H1 (cell line): ENCODE measurements at regions of chr9 and their contacts with region 1.

Region 1: GRCh38 chr9:34603610-34604231 is 8.2 kb downstream of the RPP25L start:
- DNase-seq: peak in 1 of 2 experiments; percentile 96
- H3K4me3 ChIP-seq: no peak overlapping the region
- H3K27ac ChIP-seq: no peak overlapping the region
- H3K4me1 ChIP-seq: peaks cover 0 to 5% (median 2%) of the 10 kb centered on the region in 4 experiments; a peak in 2 of 7 replicates
- H3K27me3 ChIP-seq: peaks cover 0 to 3% (median 0%) of the 10 kb centered on the region in 4 experiments; a peak in 2 of 7 replicates
- CTCF ChIP-seq: peak; percentile 77 to 96 (median 96)
- EP300 ChIP-seq: no peak
- POLR2A ChIP-seq: no peak
- RAD21 ChIP-seq: peak; percentile 99

Region 2: DNA sequence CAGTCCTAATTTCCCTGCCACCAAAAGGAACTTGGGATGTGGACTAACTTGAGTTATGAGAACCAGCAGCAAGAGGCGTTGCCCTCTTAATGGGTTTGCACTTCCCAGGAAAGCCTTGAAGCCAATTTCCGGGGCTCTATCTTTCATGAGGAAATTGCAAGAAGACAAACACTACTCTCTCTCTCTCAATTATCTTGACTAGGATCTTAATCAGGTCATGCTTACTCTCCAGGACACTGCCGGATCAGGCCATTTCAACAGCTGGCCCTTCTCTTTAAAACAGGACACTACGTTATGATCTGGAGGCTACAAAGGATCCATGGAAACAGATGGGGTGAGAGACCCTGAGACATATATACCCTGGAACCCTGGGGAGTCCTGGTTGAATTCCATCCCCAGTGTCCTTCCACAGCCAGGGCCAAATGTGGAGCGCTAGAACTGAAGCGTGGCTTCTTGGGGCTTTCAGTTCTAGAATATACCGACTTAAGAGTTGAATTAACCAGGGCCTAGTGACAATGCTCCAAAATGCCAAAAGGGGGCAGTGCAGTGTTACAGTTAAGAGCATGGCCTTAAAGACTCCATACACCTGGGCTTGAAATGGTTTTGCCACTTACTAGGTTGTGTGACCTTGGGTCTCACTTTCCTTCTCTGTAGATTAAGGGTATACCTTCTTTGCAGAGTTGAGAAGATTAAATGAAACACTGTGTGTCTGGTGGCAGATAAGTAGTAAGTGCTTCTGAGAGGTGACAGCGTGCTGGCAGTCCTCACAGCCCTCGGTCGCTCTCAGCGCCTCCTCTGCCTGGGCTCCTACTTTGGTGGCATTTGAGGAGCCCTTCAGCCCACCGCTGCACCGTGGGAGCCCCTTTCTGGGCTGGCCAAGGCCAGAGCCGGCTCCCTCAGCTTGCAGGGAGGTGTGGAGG is 166.5 kb before region 1 on chr9:
- CTCF ChIA-PET with region 1: interaction called, 28 read pairs
- POLR2A ChIA-PET with region 1: no interaction called
- DNase-seq: peak; percentile 47 to 73
- H3K4me3 ChIP-seq: no peak overlapping the region
- H3K27ac ChIP-seq: no peak overlapping the region
- H3K4me1 ChIP-seq: no peaks in the 10 kb centered on the region
- H3K27me3 ChIP-seq: no peaks in the 10 kb centered on the region
- CTCF ChIP-seq: peak in 2 of 3 experiments; percentile 91 to 94; a peak in 3 of 4 replicates
- EP300 ChIP-seq: no peak
- POLR2A ChIP-seq: no peak
- RAD21 ChIP-seq: peak; percentile 95 to 99

Region 3: DNA sequence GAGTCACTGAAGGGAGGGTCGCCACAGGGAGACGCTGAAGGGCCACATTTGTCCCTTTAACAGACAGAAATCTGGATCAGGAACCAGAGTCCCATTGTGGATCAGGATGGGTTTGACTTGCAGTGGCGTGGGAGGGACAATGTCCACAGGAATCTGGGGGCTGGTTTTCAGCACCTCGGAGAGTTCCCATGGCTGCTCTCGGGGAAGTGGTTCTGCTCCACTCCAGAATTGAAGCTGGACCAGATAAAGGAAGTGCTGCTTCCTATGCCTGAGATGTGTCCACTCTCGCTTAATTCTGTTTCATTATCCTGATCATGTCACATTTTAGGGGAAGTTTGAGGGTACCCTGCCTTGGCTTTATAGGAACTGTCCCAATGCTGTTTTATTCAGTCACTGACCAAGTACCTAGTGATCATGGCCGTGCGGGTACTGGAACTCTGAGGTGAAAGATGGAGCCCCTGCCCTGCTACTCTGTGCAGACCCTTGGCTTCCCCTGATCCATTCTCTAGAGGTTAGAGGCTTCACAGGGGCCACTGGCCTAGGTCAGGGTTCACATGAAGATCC is 109.7 kb before region 1 on chr9:
- CTCF ChIA-PET with region 1: interaction called, 65 read pairs
- POLR2A ChIA-PET with region 1: no interaction called
- DNase-seq: peak in 1 of 2 experiments; percentile 84
- H3K4me3 ChIP-seq: no peak overlapping the region
- H3K27ac ChIP-seq: no peak overlapping the region
- H3K4me1 ChIP-seq: no peaks in the 10 kb centered on the region
- H3K27me3 ChIP-seq: no peaks in the 10 kb centered on the region; a peak in 1 of 7 replicates
- CTCF ChIP-seq: no peak
- EP300 ChIP-seq: no peak
- POLR2A ChIP-seq: no peak
- RAD21 ChIP-seq: no peak

Region 4: DNA sequence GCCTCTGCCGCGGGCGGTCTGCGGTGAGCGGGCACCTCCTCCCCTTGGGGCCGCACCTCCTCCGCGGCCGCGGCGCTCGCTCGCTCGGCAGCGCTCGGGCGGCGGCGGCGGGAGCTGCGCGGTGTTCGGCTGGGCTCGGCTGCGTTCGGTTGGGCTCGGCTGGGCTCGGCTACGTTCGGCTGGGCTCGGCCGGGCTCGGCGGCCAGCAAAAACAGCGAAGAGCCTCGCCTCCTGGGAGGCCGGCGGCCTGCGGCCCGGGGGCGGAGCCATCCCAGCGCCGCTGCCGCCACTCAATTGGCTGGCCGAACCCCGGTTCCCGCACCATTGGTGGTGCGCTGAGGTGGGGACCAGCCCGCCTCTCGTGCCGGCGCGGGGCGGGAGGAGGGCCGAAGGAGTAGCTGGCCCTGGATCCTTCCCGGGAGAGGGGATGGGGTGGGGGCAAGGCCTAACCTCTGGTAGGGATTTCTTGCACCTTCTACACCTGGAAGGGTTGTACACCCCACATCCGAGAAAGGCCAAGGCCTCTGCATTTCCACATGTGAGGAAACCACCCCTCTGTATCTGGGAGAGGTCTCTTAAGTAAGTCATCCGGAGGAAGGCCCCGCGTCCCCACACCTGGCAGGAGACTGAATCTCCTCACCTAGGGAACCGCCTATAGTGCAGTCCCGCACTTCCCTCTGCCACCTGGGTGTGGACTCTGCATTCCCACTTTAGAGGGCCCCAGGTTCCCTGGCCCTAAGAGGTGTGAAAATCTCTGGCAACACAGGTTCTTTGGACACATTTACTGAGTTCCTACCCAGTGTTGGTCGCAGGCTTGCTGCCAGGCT is 80.5 kb before region 1 on chr9 and contains the start of gene ENHO:
- CTCF ChIA-PET with region 1: interaction called, 18 read pairs
- POLR2A ChIA-PET with region 1: no interaction called
- DNase-seq: peak; percentile 82 to 99
- H3K4me3 ChIP-seq: peak within 1 kb of the TSS; percentile 56 to 78 (median 64)
- H3K27ac ChIP-seq: no peak within 1 kb of the TSS
- H3K4me1 ChIP-seq: peaks cover 0 to 17% (median 8%) of the 10 kb centered on the region in 4 experiments; a peak in 6 of 7 replicates
- H3K27me3 ChIP-seq: peaks cover 1 to 14% (median 11%) of the 10 kb centered on the region in 4 experiments; a peak in 6 of 7 replicates
- CTCF ChIP-seq: no peak
- EP300 ChIP-seq: no peak
- POLR2A ChIP-seq: 0 out of 3 replicates have a peak, but pooled peaks of 1 of the 2 experiments have one; percentile 38
- RAD21 ChIP-seq: no peak
- total RNA-seq, gene ENHO: 12.2 and 14.1 TPM in 2 replicates

Region 5: GRCh38 chr9:34559624-34560452 is 43.9 kb before region 1 on chr9:
- CTCF ChIA-PET with region 1: interaction called, 214 read pairs
- POLR2A ChIA-PET with region 1: interaction called, 3 read pairs
- DNase-seq: no peak
- H3K4me3 ChIP-seq: no peak overlapping the region
- H3K27ac ChIP-seq: no peak overlapping the region
- H3K4me1 ChIP-seq: peaks cover 7 to 24% (median 16%) of the 10 kb centered on the region in 4 experiments
- H3K27me3 ChIP-seq: no peaks in the 10 kb centered on the region; a peak in 3 of 7 replicates
- CTCF ChIP-seq: no peak
- EP300 ChIP-seq: no peak
- POLR2A ChIP-seq: no peak
- RAD21 ChIP-seq: no peak

Region 6: DNA sequence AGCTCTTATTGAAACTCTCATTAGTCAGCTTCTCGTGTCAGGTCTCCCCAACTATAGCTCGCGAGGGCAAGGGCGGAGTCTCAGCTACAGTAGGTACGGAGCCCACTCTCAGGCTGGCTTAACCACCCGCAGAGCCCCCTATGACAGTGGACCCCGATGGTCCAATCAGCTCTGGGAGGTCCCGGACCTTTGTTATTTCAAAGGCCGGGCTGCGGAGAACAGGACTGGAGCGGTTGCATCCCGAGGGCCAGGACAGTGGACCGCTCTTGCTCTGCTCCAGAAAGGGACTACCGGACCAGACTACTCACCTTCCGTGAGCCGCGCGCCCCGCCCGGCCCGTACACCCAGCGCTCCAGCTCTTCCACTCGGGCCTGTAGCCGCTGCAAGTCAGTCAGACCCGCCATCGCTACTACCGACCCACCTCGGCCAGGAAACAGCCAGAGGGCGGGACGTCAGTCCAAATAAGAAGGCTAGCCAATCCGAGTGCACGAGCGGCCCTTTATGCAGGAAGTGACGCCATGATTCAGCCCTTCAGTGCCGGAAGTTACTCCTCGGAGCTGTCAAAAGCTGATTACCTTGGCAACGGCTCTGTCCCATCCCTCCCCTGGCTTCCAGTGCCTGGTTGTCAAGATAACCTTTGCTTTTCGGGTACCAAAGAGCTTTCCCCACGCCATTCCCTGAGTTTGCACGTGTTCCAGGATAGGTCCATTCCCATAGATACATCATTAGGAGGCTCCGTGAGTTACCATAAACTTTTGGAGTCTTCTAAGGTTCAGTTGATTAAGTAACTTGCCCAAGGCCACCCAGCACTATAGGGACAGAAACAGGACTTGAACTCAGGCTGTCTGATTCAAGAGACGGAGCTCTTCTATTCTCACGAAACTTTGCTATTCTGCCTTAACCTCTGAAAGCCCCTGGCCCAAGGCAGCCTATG is 16.6 kb after region 1 on chr9 and contains the start of gene DCTN3:
- CTCF ChIA-PET with region 1: interaction called, 26 read pairs
- POLR2A ChIA-PET with region 1: no interaction called
- DNase-seq: peak in 1 of 2 experiments; percentile 83
- H3K4me3 ChIP-seq: peak within 1 kb of the TSS; percentile 55 to 79 (median 72)
- H3K27ac ChIP-seq: no peak within 1 kb of the TSS
- H3K4me1 ChIP-seq: peaks cover 0 to 5% (median 4%) of the 10 kb centered on the region in 4 experiments; a peak in 5 of 7 replicates
- H3K27me3 ChIP-seq: peaks cover 17 to 37% (median 35%) of the 10 kb centered on the region in 4 experiments
- CTCF ChIP-seq: peak in 1 of 3 experiments; percentile 6; a peak in 1 of 4 replicates
- EP300 ChIP-seq: no peak
- POLR2A ChIP-seq: no peak
- RAD21 ChIP-seq: no peak
- total RNA-seq, gene DCTN3: 23.4 and 25.6 TPM in 2 replicates